Right lobe of liver (tissue), 6 donors: ENCODE measurements at regions of chr4 and their contacts with region 1.

Region 1: DNA sequence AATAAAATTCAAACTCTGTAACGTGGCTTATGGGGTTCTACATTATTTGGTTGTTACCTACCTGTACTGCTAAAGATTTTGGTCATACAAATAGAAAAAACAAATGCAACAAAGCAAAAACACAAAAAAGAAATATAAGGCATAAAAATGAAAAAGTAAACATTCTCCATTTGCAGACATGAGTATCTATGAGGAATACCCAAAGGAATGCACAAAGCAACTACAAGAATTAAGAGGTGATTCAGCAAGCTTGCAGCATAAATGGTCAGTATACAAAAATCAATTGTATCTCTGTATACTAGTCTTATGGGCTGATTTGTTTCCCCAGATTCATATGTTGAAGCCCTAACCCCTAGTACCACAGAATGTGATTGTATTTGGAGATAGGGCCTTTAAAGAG is 3.6 kb upstream of the PDE5A start:
- DNase-seq: no peak
- ATAC-seq: no peak
- H3K4me3 ChIP-seq: no peak overlapping the region
- H3K27ac ChIP-seq: no peak overlapping the region
- H3K4me1 ChIP-seq: no peaks in the 10 kb centered on the region
- H3K27me3 ChIP-seq: no peaks in the 10 kb centered on the region
- CTCF ChIP-seq: no peak
- POLR2A ChIP-seq: no peak

Region 2: DNA sequence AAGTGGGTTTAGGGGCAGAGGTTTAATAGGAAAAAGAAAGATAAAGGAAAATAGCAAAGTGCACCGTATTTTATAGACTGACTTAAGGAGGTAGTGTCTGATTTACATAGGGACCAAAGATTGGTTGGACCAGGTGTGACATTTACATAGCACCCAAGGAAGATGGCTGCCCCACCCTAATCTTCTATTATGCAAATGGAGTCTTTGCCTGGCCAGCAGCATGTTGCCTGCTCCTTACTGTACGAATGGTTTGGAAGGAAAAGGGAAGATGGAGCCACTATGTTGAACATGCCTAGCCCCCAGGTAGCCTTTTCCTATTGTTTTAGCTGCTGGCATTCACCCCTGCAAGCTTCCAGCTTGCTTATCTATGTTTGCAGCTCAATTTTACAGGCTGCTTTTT is 142.6 kb after region 1 on chr4:
- intact Hi-C with region 1: loop called (anchors 10 kb)
- DNase-seq: no peak
- ATAC-seq: no peak
- H3K4me3 ChIP-seq: no peak overlapping the region
- H3K27ac ChIP-seq: no peak overlapping the region
- H3K4me1 ChIP-seq: no peaks in the 10 kb centered on the region
- H3K27me3 ChIP-seq: no peaks in the 10 kb centered on the region
- CTCF ChIP-seq: no peak
- POLR2A ChIP-seq: no peak

Region 3: GRCh38 chr4:119785963-119786362 is 153.7 kb after region 1 on chr4:
- intact Hi-C with region 1: loop called in 1 of 2 experiments (anchors 10 kb)
- DNase-seq: peak in 1 of 3 donors; percentile 28
- ATAC-seq: peak; percentile 47 to 62 (median 56)
- H3K4me3 ChIP-seq: no peak overlapping the region
- H3K27ac ChIP-seq: no peak overlapping the region
- H3K4me1 ChIP-seq: no peaks in the 10 kb centered on the region
- H3K27me3 ChIP-seq: no peaks in the 10 kb centered on the region
- CTCF ChIP-seq: peak; percentile 56 to 64 (median 61)
- POLR2A ChIP-seq: no peak